ENCODE measurements at regions of chr5 and their contacts with region 1.

Region 1: DNA sequence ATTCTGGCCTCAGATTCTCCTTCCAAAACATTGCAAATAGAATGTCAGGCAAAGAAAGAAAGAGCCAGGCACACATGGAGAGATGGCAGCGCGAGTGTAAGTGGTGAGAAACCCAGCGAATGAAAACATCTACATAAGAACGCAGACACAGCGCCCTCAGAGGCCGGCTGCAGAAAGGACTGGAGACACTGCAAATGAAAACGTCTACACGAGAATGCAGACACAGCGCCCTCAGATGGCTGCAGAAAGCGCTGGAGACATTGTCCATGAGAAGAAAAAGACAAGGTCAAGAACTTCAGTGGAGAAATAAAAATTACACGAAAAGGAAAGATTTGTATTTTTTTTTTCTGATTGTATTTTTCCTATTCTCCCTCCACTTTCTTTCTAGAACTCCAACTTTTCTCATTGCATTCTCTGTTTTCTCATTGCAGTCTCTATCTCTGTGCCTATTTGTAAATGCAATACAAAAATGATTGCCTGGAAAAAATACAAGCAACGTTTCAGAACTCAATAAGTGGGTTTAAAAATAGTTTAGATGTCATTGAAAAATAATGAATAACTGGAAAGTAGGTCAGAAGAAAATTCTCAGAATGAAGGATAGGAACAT is 117.9 kb upstream of the LPCAT1 start:
- DNase-seq: peak; percentile 40
- H3K4me3 ChIP-seq: no peak overlapping the region
- H3K27me3 ChIP-seq: peaks cover 14% of the 10 kb centered on the region
- CTCF ChIP-seq: peak; percentile 97

Region 2: DNA sequence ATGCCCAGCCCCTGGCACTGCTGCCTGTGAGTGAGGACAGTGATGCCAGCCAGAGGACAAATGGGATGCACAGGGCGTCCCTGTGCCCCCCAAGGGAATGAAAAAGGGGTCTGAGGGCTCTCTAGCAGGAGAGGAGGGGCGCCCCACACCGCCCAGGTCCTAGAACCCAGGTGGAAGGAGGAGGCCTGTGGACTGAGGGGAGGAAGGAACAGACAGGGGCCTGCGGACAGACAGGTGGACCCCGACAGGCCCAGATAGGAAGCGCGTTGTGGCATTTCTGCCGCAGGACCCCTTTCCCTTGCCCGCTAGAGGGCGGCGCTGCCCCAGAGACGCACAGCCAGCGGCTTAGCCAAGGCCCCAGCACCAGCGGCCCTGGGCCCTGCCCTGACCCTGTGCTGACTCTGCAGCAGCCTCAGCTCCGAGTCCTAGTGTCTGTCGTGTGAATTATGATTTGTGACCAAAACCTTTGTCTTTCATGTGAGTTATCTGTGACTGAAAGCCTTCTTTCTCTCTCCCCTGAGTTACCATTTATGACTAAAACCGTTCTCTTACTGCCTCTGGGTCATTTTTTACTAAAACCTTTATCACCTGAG is 718.3 kb before region 1 on chr5:
- CTCF ChIA-PET with region 1: interaction called, 10 read pairs
- POLR2A ChIA-PET with region 1: no interaction called
- DNase-seq: no peak
- H3K4me3 ChIP-seq: no peak overlapping the region
- H3K27me3 ChIP-seq: peaks cover 3% of the 10 kb centered on the region; the same call in 1 of the 2 replicates
- CTCF ChIP-seq: peak; percentile 95

Region 3: DNA sequence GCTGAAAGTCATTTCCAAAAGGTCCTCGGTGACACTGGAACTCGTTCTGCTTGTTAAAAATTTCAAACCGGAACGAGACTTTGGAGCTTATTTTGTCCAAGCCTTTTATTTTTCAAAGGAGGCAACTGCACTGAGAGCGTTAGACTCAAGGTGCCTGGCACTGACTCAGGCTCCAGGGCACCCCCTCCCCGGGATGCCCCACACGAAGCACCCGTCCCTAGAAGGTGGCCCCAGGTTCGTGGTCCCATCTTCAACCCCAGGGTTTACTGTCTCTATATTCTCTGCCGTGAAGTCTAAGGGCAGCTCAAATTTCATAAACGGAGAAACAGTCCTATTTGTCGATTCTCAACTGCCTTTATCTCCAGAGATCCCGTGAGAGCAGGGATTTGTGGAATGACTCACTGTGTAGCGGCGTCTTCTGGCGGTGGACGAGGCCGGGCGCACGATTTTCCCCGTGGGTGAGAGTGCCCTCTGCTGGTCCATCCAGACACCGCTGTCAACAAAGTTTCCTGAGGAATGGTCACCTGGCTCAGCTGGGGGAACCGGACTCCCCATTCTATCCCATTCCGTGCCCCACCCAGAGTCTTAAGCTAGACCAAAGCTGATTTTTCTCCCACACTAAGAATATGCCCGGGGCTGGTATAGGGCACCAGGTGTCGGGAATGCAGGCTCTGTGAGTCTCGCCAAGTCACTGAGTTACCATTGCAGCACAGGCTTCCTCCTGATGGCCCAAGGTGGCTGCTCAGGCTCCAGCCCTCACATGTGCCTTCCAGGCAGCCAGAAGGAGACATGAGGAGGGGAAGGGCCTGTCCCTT is 467.3 kb before region 1 on chr5:
- CTCF ChIA-PET with region 1: interaction called, 110 read pairs
- POLR2A ChIA-PET with region 1: no interaction called
- DNase-seq: peak; percentile 25
- H3K4me3 ChIP-seq: no peak overlapping the region
- H3K27me3 ChIP-seq: no peaks in the 10 kb centered on the region
- CTCF ChIP-seq: peak; percentile 85

Region 4: DNA sequence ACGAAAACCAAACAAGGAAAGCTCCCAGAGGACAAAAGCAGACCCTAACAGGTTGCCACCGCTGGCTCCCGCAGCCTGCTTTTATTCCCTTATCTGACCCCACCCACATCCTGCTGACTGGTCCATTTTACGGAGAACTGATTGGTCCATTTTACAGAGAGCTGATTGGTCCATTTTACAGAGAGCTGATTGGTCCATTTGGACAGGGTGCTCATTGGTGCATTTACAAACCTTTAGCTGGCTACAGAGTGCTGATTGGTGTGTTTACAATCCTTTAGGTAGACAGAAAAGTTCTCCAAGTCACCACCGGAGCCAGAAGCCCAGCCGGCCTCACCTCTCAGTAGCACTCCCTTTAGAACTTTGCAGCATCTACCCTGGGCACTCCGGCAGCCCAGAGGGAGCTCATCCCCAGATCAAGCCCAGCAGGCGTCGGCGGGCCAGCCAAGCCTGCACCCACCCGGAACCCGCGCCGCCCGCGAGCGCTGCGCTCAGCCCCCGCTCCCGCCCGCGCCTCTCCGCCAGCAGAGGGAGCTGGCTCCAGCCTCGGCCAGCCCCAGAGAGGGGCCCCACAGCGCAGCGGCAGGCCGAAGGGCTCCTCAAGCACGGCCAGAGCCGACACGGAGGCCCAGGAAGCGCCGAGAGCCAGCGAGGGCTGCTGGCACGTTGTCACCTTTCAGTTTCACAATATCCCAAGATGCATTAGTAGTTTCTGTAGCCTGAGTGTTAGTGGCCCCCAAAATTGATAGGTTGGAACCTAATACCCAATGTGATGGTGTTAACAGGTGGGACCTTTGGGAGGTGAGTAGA is 261.4 kb before region 1 on chr5:
- CTCF ChIA-PET with region 1: interaction called, 32 read pairs
- POLR2A ChIA-PET with region 1: no interaction called
- DNase-seq: no peak
- H3K4me3 ChIP-seq: no peak overlapping the region
- H3K27me3 ChIP-seq: peaks cover 5% of the 10 kb centered on the region
- CTCF ChIP-seq: peak; percentile 49

Region 5: GRCh38 chr5:1657161-1657741 is 15.6 kb after region 1 on chr5:
- CTCF ChIA-PET with region 1: interaction called, 11 read pairs
- POLR2A ChIA-PET with region 1: no interaction called
- DNase-seq: no peak
- H3K4me3 ChIP-seq: no peak overlapping the region
- H3K27me3 ChIP-seq: peaks cover 18% of the 10 kb centered on the region
- CTCF ChIP-seq: no peak

Measured in BJ (cell line).